ENCODE measurements at regions of chr1 and their contacts with region 1.

Region 1: GRCh38 chr1:116881879-116882520 is 27.7 kb upstream of the PTGFRN start:
- DNase-seq: peak; percentile 42
- ATAC-seq: peak; percentile 75

Region 2: GRCh38 chr1:116777831-116778830 is 103.9 kb before region 1 on chr1:
- intact Hi-C with region 1: no loop called
- DNase-seq: no peak
- ATAC-seq: no peak

Region 3: DNA sequence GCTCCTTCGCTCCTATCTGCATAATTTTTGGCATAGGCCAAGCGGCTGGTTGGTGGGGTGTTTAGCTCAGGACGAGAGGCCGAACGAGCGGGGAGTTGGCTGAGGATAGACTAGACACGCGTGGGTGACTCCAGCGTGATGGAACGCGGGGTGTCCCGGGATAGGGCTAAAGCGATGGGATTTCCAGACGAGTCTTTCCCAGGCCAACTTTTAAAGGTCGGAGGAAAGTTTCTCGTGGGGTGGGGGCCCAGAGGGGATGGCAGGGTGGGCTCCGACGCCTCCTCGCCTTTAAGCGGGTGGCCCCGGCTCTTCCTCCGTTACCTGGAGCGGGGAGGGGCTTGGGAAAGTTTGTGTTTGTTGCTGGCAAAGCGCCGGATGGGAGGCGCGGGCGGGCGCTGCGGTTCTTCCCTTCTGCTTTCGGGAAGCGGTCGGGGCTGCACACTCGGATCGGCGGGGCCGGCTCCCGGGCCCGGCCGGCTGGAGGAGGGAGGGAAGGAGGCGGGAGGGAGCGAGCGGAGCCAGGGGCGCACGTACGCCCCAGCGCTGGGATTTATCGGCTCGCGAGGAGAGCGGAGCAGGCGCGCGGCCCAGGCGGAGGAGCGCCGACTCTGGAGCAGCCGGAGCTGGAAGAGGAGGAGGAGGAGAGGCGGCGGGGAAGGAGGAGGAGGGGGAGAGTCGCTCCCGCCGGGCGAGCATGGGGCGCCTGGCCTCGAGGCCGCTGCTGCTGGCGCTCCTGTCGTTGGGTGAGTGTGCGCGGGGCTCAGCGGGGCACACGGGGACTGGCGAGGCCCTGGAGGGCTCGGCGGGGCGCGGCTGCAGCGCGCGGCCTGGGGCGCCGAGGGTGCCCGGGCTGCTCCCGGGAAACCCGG is 27.7 kb after region 1 on chr1 and contains the start of gene PTGFRN:
- intact Hi-C with region 1: loop called (anchors 2 kb)
- DNase-seq: peak; percentile 87
- ATAC-seq: peak; percentile 83
- total RNA-seq, gene PTGFRN: 99.6 TPM